ENCODE measurements at regions of chr7 and their contacts with region 1.

Region 1: GRCh38 chr7:116671681-116672595 is at the start of gene MET:
- DNase-seq: peak; percentile 85
- H3K4me3 ChIP-seq: peak within 1 kb of the TSS; percentile 43
- H3K27ac ChIP-seq: peak within 1 kb of the TSS; percentile 65
- H3K4me1 ChIP-seq: no peaks in the 10 kb centered on the region
- H3K27me3 ChIP-seq: no peaks in the 10 kb centered on the region
- CTCF ChIP-seq: peak; percentile 45
- total RNA-seq, gene MET: 38.3 to 45.3 TPM

Region 2: DNA sequence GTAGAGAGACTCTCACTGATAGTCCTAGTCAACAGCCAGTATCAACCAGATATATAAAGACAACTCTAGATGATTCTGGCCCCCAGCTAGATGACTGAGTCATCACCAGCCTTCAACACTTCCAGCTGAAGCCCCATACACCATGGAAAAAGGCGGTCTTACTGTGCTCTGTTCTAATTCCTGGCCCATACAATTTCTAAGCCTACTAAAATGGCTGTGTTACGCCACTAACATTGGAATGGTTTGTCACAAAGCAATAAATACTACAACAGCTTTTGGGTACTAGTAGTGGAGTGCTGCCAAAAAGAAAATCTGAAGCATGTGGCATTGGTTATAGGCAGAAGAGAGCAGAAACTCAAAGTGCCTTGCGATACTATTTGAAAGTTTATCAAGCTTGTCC is 474.6 kb before region 1 on chr7:
- intact Hi-C with region 1: no loop called
- DNase-seq: no peak
- H3K4me3 ChIP-seq: no peak overlapping the region
- H3K27ac ChIP-seq: no peak overlapping the region
- H3K4me1 ChIP-seq: no peaks in the 10 kb centered on the region
- H3K27me3 ChIP-seq: no peaks in the 10 kb centered on the region
- CTCF ChIP-seq: no peak

Region 3: DNA sequence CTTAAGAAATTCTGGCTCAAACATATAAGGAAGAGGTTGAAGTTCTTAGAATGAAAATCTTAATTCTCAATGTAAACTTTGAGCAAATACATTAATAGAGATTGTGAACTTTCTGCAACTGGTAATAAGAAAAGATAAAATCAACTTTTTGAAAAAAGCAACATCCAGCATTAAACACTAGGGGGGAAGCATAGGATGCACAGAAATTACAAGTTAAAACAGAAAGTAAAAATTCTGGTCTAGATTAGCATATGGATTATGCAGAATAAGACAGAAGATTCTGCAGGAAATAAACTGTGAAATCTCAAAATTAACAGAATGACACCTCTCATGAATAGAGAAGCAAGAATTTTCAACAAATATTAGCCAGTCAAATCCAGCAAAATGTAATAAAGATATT is 210.4 kb before region 1 on chr7:
- intact Hi-C with region 1: no loop called
- DNase-seq: no peak
- H3K4me3 ChIP-seq: no peak overlapping the region
- H3K27ac ChIP-seq: no peak overlapping the region
- H3K4me1 ChIP-seq: no peaks in the 10 kb centered on the region
- H3K27me3 ChIP-seq: no peaks in the 10 kb centered on the region
- CTCF ChIP-seq: no peak

Region 4: DNA sequence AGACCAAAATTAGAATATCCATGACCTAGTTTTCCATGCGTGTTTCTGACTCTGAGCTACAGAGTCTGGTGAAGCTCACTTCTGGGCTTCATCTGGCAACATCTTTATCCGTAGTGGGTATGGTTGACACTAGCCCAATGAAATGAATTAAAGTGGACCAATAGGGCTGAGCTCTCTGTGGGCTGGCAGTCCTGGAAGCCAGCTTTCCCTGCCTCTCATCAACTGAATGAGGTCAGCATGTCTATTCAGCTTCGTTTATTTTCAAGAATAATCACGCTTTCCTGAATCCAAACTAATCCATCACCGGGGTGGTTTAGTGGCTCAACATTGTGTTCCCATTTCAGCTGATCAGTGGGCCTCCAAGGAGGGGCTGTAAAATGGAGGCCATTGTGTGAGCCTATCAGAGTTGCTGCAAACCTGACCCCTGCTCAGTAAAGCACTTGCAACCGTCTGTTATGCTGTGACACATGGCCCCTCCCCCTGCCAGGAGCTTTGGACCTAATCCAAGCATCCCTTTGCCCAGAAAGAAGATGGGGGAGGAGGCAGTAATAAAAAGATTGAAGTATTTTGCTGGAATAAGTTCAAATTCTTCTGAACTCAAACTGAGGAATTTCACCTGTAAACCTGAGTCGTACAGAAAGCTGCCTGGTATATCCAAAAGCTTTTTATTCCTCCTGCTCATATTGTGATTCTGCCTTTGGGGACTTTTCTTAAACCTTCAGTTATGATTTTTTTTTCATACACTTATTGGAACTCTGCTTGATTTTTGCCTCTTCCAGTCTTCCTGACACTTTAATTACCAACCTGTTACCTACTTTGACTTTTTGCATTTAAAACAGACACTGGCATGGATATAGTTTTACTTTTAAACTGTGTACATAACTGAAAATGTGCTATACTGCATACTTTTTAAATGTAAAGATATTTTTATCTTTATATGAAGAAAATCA is 111.6 kb before region 1 on chr7:
- intact Hi-C with region 1: no loop called
- DNase-seq: no peak
- H3K4me3 ChIP-seq: no peak overlapping the region
- H3K27ac ChIP-seq: no peak overlapping the region
- H3K4me1 ChIP-seq: no peaks in the 10 kb centered on the region
- H3K27me3 ChIP-seq: no peaks in the 10 kb centered on the region
- CTCF ChIP-seq: no peak

Region 5: GRCh38 chr7:116629051-116629463 is 42.9 kb before region 1 on chr7:
- intact Hi-C with region 1: no loop called
- DNase-seq: no peak
- H3K4me3 ChIP-seq: no peak overlapping the region
- H3K27ac ChIP-seq: no peak overlapping the region
- H3K4me1 ChIP-seq: no peaks in the 10 kb centered on the region
- H3K27me3 ChIP-seq: no peaks in the 10 kb centered on the region
- CTCF ChIP-seq: no peak

Region 6: GRCh38 chr7:116786791-116787443 is 115.0 kb after region 1 on chr7:
- intact Hi-C with region 1: loop called (anchors 5 kb)
- DNase-seq: no peak
- H3K4me3 ChIP-seq: no peak overlapping the region
- H3K27ac ChIP-seq: no peak overlapping the region
- H3K4me1 ChIP-seq: no peaks in the 10 kb centered on the region
- H3K27me3 ChIP-seq: no peaks in the 10 kb centered on the region
- CTCF ChIP-seq: no peak

Region 7: GRCh38 chr7:116809636-116810266 is 137.8 kb after region 1 on chr7:
- intact Hi-C with region 1: loop called (anchors 5 kb)
- DNase-seq: peak; percentile 66
- H3K4me3 ChIP-seq: no peak overlapping the region
- H3K27ac ChIP-seq: peak overlapping the region; percentile 67
- H3K4me1 ChIP-seq: peaks cover 10% of the 10 kb centered on the region
- H3K27me3 ChIP-seq: no peaks in the 10 kb centered on the region
- CTCF ChIP-seq: peak; percentile 54